PC-9 (cell line): ENCODE measurements at regions of chr20 and their contacts with region 1.

Region 1: GRCh38 chr20:23357767-23358591 is 4.0 kb upstream of the GZF1 start:
- DNase-seq: peak; percentile 98 to 100
- H3K4me3 ChIP-seq: peak overlapping the region; percentile 86
- H3K27ac ChIP-seq: peak overlapping the region; percentile 90
- H3K4me1 ChIP-seq: peaks cover 29% of the 10 kb centered on the region
- H3K27me3 ChIP-seq: no peaks in the 10 kb centered on the region
- CTCF ChIP-seq: no peak; the same call in 1 of the 2 replicates

Region 2: GRCh38 chr20:23420943-23421931 is 63.3 kb after region 1 on chr20 and contains the start of gene NAPB:
- CTCF ChIA-PET with region 1: no interaction called
- POLR2A ChIA-PET with region 1: no interaction called
- intact Hi-C with region 1: loop called (anchors 1 kb)
- DNase-seq: peak; percentile 79 to 92
- H3K4me3 ChIP-seq: peak within 1 kb of the TSS; percentile 78
- H3K27ac ChIP-seq: 0 out of 2 replicates have a peak within 1 kb of the TSS, but pooled peaks have one; percentile 22
- H3K4me1 ChIP-seq: peaks cover 13% of the 10 kb centered on the region
- H3K27me3 ChIP-seq: no peaks in the 10 kb centered on the region
- CTCF ChIP-seq: peak; percentile 47; the same call in 1 of the 2 replicates
- total RNA-seq, gene NAPB: 13.8 and 16.5 TPM in 2 replicates